ENCODE measurements at regions of chr16 and their contacts with region 1.

Region 1: GRCh38 chr16:30637942-30638341 is 12.8 kb upstream of the PRR14 start:
- DNase-seq: peak; percentile 31 to 67
- H3K4me3 ChIP-seq: no peak overlapping the region
- H3K27ac ChIP-seq: no peak overlapping the region
- H3K4me1 ChIP-seq: peaks cover 13% of the 10 kb centered on the region; the same call in 1 of the 2 replicates
- H3K27me3 ChIP-seq: no peaks in the 10 kb centered on the region
- CTCF ChIP-seq: peak; percentile 73

Region 2: GRCh38 chr16:30041846-30042267 is 596.1 kb before region 1 on chr16:
- CTCF ChIA-PET with region 1: interaction called, 10 read pairs
- POLR2A ChIA-PET with region 1: interaction called, 3 read pairs
- intact Hi-C with region 1: no loop called
- DNase-seq: no peak
- H3K4me3 ChIP-seq: no peak overlapping the region
- H3K27ac ChIP-seq: no peak overlapping the region
- H3K4me1 ChIP-seq: 0 out of 2 replicates have a peak, but pooled peaks cover 3% of the 10 kb centered on the region
- H3K27me3 ChIP-seq: no peaks in the 10 kb centered on the region
- CTCF ChIP-seq: peak; percentile 74

Region 3: GRCh38 chr16:30669896-30670797 is 32.2 kb after region 1 on chr16:
- CTCF ChIA-PET with region 1: no interaction called
- POLR2A ChIA-PET with region 1: no interaction called
- intact Hi-C with region 1: no loop called
- DNase-seq: no peak
- H3K4me3 ChIP-seq: no peak overlapping the region
- H3K27ac ChIP-seq: no peak overlapping the region
- H3K4me1 ChIP-seq: no peaks in the 10 kb centered on the region
- H3K27me3 ChIP-seq: no peaks in the 10 kb centered on the region
- CTCF ChIP-seq: no peak